AG04450 (cell line): ENCODE measurements at regions of chr19 and their contacts with region 1.

Region 1: GRCh38 chr19:8005534-8006256 is at the start of gene ELAVL1:
- DNase-seq: peak; percentile 50
- H3K4me3 ChIP-seq: peak within 1 kb of the TSS; percentile 95
- H3K27ac ChIP-seq: peak within 1 kb of the TSS; percentile 57
- H3K27me3 ChIP-seq: no peaks in the 10 kb centered on the region
- CTCF ChIP-seq: no peak
- polyA plus RNA-seq, gene ELAVL1: 44.7 and 52.3 TPM in 2 replicates

Region 2: DNA sequence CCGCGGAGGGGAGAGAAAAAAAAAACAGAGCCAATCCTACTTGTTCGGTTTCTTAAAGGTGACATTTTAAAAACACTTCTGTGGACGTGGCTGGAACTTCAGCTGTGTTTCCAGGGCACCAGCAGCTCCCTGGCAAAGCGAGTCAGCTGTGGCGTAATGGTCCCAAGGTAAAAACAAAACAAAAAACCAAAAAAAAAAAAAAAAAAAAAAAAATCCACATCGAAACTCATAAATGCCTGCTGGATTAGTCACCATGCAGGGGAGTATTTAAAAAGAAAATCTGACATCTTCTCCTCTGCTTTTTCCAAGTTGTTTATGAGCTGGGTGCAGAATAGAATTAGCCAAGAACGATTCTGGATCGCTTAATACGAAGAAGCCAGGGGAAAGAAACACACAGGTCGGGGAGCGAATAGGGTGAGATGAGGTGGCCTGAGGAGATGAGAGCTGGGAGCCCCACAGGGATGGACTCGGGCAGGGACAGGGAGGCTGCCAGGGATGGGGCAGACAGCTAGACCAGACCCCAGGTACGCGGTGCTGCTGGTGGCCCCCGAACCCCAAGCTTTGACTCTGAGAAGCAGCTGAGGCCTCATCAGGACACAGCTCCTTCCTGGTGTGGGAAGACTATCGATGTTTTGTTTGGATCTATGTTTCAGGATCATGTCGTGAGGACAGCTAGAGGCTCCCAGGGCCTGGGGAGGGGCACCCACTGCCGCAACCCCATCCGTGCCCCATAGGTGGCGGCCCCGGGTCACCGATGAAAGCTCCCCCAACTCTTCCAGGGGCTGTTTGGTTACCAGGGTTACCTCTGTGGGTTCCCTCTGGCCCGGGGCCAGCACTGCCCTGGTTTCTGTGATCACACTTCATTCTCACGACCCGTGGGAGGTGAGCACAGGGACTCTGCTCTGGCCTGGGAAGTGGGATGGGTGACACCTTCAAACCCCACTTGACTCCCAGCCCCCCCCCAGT is 76.7 kb before region 1 on chr19:
- CTCF ChIA-PET with region 1: interaction called, 15 read pairs
- POLR2A ChIA-PET with region 1: interaction called, 3 read pairs
- DNase-seq: peak; percentile 78
- H3K4me3 ChIP-seq: peak overlapping the region; percentile 29
- H3K27ac ChIP-seq: peak overlapping the region; percentile 99
- H3K27me3 ChIP-seq: no peaks in the 10 kb centered on the region
- CTCF ChIP-seq: peak; percentile 47

Region 3: GRCh38 chr19:7970716-7971448 is 34.8 kb before region 1 on chr19:
- CTCF ChIA-PET with region 1: interaction called, 48 read pairs
- POLR2A ChIA-PET with region 1: no interaction called
- DNase-seq: no peak
- H3K4me3 ChIP-seq: no peak overlapping the region
- H3K27ac ChIP-seq: no peak overlapping the region
- H3K27me3 ChIP-seq: no peaks in the 10 kb centered on the region
- CTCF ChIP-seq: peak; percentile 81

Region 4: GRCh38 chr19:8017808-8018207 is 12.1 kb after region 1 on chr19:
- CTCF ChIA-PET with region 1: interaction called, 18 read pairs
- POLR2A ChIA-PET with region 1: interaction called, 12 read pairs
- DNase-seq: no peak
- H3K4me3 ChIP-seq: no peak overlapping the region
- H3K27ac ChIP-seq: no peak overlapping the region
- H3K27me3 ChIP-seq: no peaks in the 10 kb centered on the region
- CTCF ChIP-seq: no peak

Region 5: DNA sequence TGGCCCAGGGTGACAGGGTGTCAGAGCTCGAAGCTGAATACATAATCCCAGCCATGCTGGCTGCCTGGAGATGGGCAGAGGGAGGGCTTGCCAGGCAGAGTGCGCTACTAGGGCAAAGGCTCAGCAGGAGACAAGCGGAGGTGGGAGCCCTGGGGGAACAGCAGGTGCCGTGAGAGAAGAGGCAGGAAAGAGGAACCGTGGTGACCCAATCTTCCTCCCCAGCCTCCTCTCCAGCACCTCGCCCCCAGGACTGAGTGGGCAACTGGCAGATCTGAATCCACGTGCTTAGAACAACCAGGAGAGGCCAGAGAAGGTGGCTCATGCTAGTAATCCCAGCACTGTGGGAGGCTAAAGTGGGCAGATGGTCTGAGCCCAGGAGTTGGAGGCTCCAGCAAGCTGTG is 35.8 kb after region 1 on chr19:
- CTCF ChIA-PET with region 1: no interaction called
- POLR2A ChIA-PET with region 1: no interaction called
- DNase-seq: no peak
- H3K4me3 ChIP-seq: no peak overlapping the region
- H3K27ac ChIP-seq: no peak overlapping the region
- H3K27me3 ChIP-seq: peaks cover 6% of the 10 kb centered on the region
- CTCF ChIP-seq: no peak

Region 6: GRCh38 chr19:8064911-8065874 is 59.5 kb after region 1 on chr19:
- CTCF ChIA-PET with region 1: interaction called, 4 read pairs
- POLR2A ChIA-PET with region 1: interaction called, 12 read pairs
- DNase-seq: no peak
- H3K4me3 ChIP-seq: no peak overlapping the region
- H3K27ac ChIP-seq: no peak overlapping the region
- H3K27me3 ChIP-seq: no peaks in the 10 kb centered on the region
- CTCF ChIP-seq: no peak